Heart right ventricle (tissue), 16 donors: ENCODE measurements at regions of chr22 and their contacts with region 1.

Region 1: GRCh38 chr22:40276996-40277823 is 69.1 kb upstream of the ADSL start:
- DNase-seq: peak in 1 of 2 donors; percentile 38
- ATAC-seq: peak; percentile 34 to 81 (median 62)
- H3K4me3 ChIP-seq: peak overlapping the region in 9 of 10 donors; percentile 4 to 48 (median 45)
- H3K27ac ChIP-seq: peak overlapping the region; percentile 56 to 88 (median 80)
- H3K4me1 ChIP-seq: peaks cover 0 to 52% (median 24%) of the 10 kb centered on the region in 9 donors
- H3K27me3 ChIP-seq: no peaks in the 10 kb centered on the region
- CTCF ChIP-seq: no peak

Region 2: DNA sequence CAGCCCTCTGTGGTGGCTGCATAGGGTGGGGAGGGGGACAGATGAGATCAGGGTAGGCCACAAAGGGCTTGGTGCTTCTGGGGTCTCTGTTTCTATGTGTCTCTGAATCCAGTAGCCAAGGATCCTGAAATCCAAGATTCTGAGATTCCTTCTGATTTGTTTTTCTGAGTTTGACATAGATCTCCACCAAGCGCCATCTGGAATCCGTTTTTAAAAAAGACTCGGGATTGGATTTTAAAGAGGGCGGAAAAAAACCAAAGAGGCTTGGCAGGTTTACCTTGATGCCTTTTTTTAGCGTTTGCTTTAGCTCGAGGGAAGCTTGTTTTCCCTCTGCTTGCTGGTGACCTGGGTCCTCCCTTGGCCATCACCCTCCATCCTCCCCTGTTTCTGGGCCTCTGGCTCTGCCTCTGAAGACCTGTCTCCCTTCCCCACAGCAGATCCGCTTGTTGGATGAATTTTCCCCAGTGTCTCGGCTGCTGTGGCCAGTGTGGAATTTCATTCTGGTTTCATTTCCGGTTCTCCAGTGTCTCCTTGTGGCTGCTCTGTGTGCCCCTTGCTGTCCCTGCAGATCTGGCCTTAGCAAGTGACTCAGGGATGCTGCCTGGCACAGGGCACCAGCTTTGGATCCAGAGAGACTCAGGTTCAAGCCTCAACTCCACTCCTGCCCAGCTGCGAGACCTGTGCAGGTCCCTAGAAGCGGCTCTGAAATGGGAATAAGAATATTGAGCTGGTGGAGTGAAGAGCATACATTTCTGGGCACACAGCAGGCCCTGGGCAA is 912.3 kb before region 1 on chr22:
- intact Hi-C with region 1: no loop called
- DNase-seq: no peak
- ATAC-seq: peak in 2 of 8 donors; percentile 22 to 24
- H3K4me3 ChIP-seq: no peak overlapping the region
- H3K27ac ChIP-seq: peak overlapping the region in 5 of 10 donors; percentile 0 to 49 (median 27)
- H3K4me1 ChIP-seq: peaks cover 0 to 29% (median 15%) of the 10 kb centered on the region in 9 donors
- H3K27me3 ChIP-seq: no peaks in the 10 kb centered on the region
- CTCF ChIP-seq: peak in 4 of 9 donors; percentile 9 to 25 (median 23)

Region 3: GRCh38 chr22:40055143-40055883 is 221.9 kb before region 1 on chr22:
- intact Hi-C with region 1: loop called in 2 of 10 experiments (anchors 10 kb)
- DNase-seq: no peak
- ATAC-seq: peak in 1 of 8 donors; percentile 10
- H3K4me3 ChIP-seq: no peak overlapping the region
- H3K27ac ChIP-seq: peak overlapping the region in 1 of 10 donors; percentile 34
- H3K4me1 ChIP-seq: peaks cover 0 to 60% (median 35%) of the 10 kb centered on the region in 9 donors
- H3K27me3 ChIP-seq: no peaks in the 10 kb centered on the region
- CTCF ChIP-seq: no peak

Region 4: DNA sequence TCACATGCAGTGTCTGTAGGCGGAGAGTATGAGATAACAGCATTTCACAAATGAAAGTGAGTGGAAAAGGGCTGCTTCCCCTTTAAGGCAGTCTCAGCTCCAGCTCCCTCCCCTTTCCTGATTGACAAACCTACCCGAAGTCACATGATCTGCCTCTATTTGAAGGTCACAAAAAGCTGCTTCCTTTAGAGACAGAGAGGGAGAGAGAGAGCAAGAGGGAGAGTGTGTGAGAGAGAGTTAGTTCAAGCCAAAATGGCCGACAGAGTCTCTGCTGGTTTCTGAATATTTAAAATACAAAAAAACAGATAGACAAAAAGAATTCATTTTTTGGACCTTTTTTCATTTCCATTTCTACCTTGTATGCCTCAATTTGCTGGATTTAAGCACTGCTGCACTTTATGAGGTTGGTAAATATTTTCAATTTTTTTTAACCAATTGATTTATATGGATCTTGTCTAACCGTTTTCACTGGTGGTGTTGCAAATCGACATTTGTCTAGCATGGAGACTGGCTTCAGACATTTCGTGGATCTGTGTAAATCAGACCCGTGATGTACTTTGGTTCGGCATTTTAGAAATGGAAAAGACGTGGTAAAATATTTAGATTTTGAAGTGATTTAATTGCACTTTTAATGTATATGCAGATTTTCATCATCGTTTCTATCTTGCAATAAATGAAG is 99.3 kb before region 1 on chr22 and contains the start of gene TNRC6B:
- intact Hi-C with region 1: loop called in 5 of 10 experiments (anchors 2 to 5 kb)
- DNase-seq: peak in 1 of 2 donors; percentile 90
- ATAC-seq: peak; percentile 96 to 99 (median 98)
- H3K4me3 ChIP-seq: peak within 1 kb of the TSS; percentile 34 to 86 (median 66)
- H3K27ac ChIP-seq: peak within 1 kb of the TSS; percentile 18 to 93 (median 83)
- H3K4me1 ChIP-seq: peaks cover 10 to 69% (median 63%) of the 10 kb centered on the region in 9 donors
- H3K27me3 ChIP-seq: no peaks in the 10 kb centered on the region
- CTCF ChIP-seq: no peak
- total RNA-seq, gene TNRC6B: 36.3 to 62.5 (median 56.0) TPM

Region 5: DNA sequence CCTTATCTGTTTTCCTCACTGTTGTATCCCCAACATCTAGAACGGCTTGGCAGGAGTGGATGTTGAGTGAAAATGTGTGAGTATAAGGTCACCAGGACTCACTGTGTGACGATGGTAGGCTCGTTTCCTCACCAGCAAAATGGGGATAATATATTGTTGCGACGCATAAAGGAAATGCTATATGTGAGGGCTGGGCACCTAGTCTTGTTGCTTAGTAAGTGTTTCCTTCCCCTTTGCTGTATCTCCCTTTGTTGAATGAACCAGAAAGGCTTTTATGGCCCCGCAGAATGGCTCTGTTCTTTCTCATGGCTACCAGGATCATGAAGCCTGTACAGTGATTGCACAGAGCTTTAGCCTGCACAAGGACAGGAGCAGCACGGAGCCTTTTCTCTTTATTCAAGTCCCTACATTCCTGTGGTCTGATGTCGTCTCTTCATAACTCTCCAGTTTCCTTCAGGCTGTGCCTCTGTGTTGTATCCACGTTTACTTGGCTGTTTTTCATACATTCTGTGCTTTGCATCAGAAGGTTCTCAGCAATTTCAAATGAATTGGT is 94.1 kb before region 1 on chr22:
- intact Hi-C with region 1: loop called in 4 of 10 experiments (anchors 2 to 5 kb)
- DNase-seq: no peak
- ATAC-seq: peak in 7 of 8 donors; percentile 14 to 50 (median 39)
- H3K4me3 ChIP-seq: peak overlapping the region in 4 of 10 donors; percentile 3 to 6 (median 4)
- H3K27ac ChIP-seq: peak overlapping the region in 9 of 10 donors; percentile 31 to 71 (median 53)
- H3K4me1 ChIP-seq: peaks cover 6 to 92% (median 78%) of the 10 kb centered on the region in 9 donors
- H3K27me3 ChIP-seq: no peaks in the 10 kb centered on the region
- CTCF ChIP-seq: no peak

Region 6: DNA sequence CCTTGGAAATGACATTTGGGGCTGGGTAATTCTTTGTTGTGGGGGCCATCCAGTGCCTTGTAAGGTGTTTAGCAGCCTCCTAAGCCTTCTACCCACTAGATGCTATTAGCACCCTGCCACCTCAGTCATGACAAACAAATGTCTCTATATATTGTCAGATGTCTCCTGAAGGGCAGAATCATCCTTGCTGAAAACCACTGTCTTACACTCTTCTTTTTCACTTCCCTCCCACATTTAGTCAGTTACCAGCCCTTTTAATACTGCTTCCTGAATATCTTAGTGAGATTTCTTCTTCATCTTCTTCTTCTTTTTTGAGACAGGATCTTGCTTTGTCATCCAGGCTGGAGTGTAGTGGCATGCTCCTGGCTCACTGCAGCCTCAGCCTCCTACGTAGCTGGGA is 66.4 kb before region 1 on chr22:
- intact Hi-C with region 1: loop called in 3 of 10 experiments (anchors 5 to 10 kb)
- DNase-seq: no peak
- ATAC-seq: peak in 1 of 8 donors; percentile 10
- H3K4me3 ChIP-seq: no peak overlapping the region
- H3K27ac ChIP-seq: peak overlapping the region in 4 of 10 donors; percentile 30 to 77 (median 60)
- H3K4me1 ChIP-seq: peaks cover 16 to 88% (median 70%) of the 10 kb centered on the region in 9 donors
- H3K27me3 ChIP-seq: no peaks in the 10 kb centered on the region
- CTCF ChIP-seq: no peak

Region 7: DNA sequence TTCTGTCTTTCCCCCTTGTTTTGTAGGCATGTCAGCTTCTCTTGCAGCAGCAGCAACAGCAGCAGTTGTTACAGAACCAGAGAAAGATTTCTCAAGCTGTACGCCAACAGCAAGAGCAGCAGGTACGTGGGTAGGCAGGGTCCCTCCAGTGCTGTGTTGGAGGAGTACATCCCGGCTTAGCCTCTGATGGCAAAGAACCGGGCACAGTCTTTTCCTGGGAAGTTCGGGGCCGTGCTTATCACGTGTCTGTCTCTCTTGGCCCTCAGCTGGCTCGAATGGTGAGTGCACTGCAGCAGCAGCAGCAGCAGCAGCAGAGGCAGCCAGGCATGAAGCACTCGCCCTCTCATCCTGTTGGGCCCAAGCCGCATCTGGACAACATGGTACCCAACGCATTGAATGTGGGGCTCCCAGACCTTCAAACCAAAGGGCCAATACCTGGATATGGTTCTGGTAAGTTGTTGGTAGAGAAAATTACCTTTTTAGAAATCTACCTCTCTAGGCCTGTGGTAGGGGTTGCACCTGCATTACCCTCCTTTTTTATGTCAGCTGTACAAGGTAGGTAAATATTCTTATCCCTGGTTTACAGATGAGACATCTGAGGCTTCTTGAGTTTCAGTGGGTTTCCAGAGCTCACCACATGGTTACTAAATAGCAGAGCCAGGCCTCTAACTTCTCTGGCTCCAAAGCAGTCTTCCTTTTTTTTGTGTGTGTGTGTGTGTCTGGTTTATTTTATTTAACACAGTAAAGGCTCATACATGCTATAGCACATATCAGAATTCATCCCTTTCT is 23.9 kb after region 1 on chr22:
- intact Hi-C with region 1: no loop called
- DNase-seq: no peak
- ATAC-seq: no peak
- H3K4me3 ChIP-seq: no peak overlapping the region
- H3K27ac ChIP-seq: no peak overlapping the region
- H3K4me1 ChIP-seq: peaks cover 0 to 10% (median 0%) of the 10 kb centered on the region in 9 donors
- H3K27me3 ChIP-seq: no peaks in the 10 kb centered on the region
- CTCF ChIP-seq: no peak

Region 8: GRCh38 chr22:40346178-40347118 is 69.2 kb after region 1 on chr22 and contains the start of gene ADSL:
- intact Hi-C with region 1: no loop called
- DNase-seq: peak; percentile 90
- ATAC-seq: peak; percentile 98 to 99 (median 98)
- H3K4me3 ChIP-seq: peak within 1 kb of the TSS; percentile 56 to 89 (median 68)
- H3K27ac ChIP-seq: peak within 1 kb of the TSS; percentile 51 to 94 (median 87)
- H3K4me1 ChIP-seq: peaks cover 0 to 31% (median 21%) of the 10 kb centered on the region in 9 donors
- H3K27me3 ChIP-seq: no peaks in the 10 kb centered on the region
- CTCF ChIP-seq: peak in 4 of 9 donors; percentile 14 to 41 (median 37)
- total RNA-seq, gene ADSL: 45.9 to 65.5 (median 53.9) TPM